MCF 10A (cell line): ENCODE measurements at regions of chr1 and their contacts with region 1.

Region 1: GRCh38 chr1:92583821-92584760 is 97.4 kb upstream of the GFI1 start:
- DNase-seq: peak; percentile 70
- H3K4me3 Mint-ChIP-seq: peak overlapping the region; percentile 21
- H3K27ac Mint-ChIP-seq: peak overlapping the region; percentile 27
- H3K4me1 Mint-ChIP-seq: peaks cover 21% of the 10 kb centered on the region
- H3K27me3 Mint-ChIP-seq: no peaks in the 10 kb centered on the region
- CTCF ChIP-seq: no peak

Region 2: GRCh38 chr1:92277105-92277723 is 306.9 kb before region 1 on chr1:
- CTCF ChIA-PET with region 1: no interaction called
- POLR2A ChIA-PET with region 1: no interaction called
- intact Hi-C with region 1: no loop called
- DNase-seq: peak; percentile 21
- H3K4me3 Mint-ChIP-seq: no peak overlapping the region
- H3K27ac Mint-ChIP-seq: no peak overlapping the region
- H3K4me1 Mint-ChIP-seq: no peaks in the 10 kb centered on the region
- H3K27me3 Mint-ChIP-seq: no peaks in the 10 kb centered on the region
- CTCF ChIP-seq: no peak

Region 3: GRCh38 chr1:92356956-92357355 is 227.1 kb before region 1 on chr1:
- CTCF ChIA-PET with region 1: no interaction called
- POLR2A ChIA-PET with region 1: interaction called, 10 read pairs
- intact Hi-C with region 1: no loop called
- DNase-seq: peak; percentile 71
- H3K4me3 Mint-ChIP-seq: no peak overlapping the region
- H3K27ac Mint-ChIP-seq: no peak overlapping the region
- H3K4me1 Mint-ChIP-seq: no peaks in the 10 kb centered on the region
- H3K27me3 Mint-ChIP-seq: no peaks in the 10 kb centered on the region
- CTCF ChIP-seq: no peak